ENCODE measurements at regions of chr15 and their contacts with region 1.

Region 1: DNA sequence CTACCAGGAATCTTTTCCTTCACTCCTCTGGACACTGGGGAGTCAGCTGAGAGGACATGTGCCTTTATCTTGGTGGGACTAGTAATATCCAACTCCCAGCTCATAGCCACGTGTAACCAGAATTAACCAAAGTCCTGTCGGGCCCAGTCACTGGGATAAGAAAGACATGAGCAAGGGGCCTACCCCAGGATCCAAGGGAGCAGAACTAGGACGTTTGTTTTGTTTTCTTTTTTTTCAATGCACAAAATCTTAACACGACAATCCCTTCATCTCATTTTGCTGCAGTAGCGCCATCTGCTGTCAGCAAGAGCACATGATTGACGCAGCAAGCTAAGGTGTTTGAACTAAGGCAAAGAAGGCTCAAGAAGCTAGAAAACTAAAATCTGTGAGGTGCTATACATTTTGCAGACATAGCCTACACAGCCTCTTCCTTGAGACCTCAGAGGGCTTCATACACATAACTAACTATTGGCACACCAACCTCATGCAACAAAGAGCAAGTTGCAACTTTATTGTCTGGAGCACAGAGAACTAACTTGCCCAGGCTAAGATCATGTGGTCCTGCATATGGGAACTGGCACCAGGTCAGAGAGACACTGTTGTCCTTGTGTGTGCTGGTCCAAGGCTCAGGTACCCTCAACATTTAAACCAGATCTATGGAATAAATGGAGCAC is 43.6 kb downstream of the RLBP1 start:
- DNase-seq: peak; percentile 60
- ATAC-seq: peak; percentile 62
- H3K4me3 Mint-ChIP-seq: no peak overlapping the region
- H3K27ac Mint-ChIP-seq: peak overlapping the region; percentile 35
- H3K4me1 Mint-ChIP-seq: peaks cover 3% of the 10 kb centered on the region; the same call in 1 of the 2 replicates
- H3K27me3 Mint-ChIP-seq: no peaks in the 10 kb centered on the region
- CTCF ChIP-seq: peak; percentile 58

Region 2: DNA sequence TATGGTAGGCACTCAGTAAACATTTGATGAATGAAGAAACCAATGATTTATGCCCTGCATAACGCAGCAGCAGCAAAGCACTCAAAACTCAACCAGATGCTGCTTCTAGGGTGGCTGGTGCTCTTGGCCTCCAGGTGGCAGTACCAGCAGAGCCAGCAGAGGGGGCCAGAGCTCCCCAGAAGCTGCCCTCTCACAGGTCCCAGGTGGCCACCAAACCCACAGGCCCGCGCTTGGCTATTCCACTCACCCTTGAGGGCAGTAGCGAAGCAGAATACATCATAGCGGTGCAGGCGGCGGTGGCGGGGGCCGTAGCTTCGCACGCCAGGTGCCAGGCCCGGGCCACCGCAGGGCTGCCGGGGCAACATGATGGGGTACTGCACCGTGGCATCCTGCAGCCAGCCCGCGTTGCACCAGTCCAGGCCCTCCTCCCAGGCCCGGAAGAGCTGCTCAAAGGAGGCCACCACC is 299.0 kb before region 1 on chr15:
- CTCF ChIA-PET with region 1: interaction called, 19 read pairs
- POLR2A ChIA-PET with region 1: no interaction called
- DNase-seq: peak; percentile 86
- ATAC-seq: peak; percentile 92
- H3K4me3 Mint-ChIP-seq: no peak overlapping the region
- H3K27ac Mint-ChIP-seq: peak overlapping the region; percentile 85; the same call in 1 of the 2 replicates
- H3K4me1 Mint-ChIP-seq: peaks cover 14% of the 10 kb centered on the region
- H3K27me3 Mint-ChIP-seq: no peaks in the 10 kb centered on the region
- CTCF ChIP-seq: peak; percentile 60

Region 3: GRCh38 chr15:88897456-88898194 is 280.1 kb before region 1 on chr15:
- CTCF ChIA-PET with region 1: interaction called, 20 read pairs
- POLR2A ChIA-PET with region 1: no interaction called
- DNase-seq: peak; percentile 53
- ATAC-seq: 0 out of 2 replicates have a peak, but pooled peaks have one; percentile 1
- H3K4me3 Mint-ChIP-seq: no peak overlapping the region; the same call in 1 of the 2 replicates
- H3K27ac Mint-ChIP-seq: peak overlapping the region; percentile 93
- H3K4me1 Mint-ChIP-seq: peaks cover 53% of the 10 kb centered on the region
- H3K27me3 Mint-ChIP-seq: 0 out of 2 replicates have a peak, but pooled peaks cover 2% of the 10 kb centered on the region
- CTCF ChIP-seq: no peak

Region 4: DNA sequence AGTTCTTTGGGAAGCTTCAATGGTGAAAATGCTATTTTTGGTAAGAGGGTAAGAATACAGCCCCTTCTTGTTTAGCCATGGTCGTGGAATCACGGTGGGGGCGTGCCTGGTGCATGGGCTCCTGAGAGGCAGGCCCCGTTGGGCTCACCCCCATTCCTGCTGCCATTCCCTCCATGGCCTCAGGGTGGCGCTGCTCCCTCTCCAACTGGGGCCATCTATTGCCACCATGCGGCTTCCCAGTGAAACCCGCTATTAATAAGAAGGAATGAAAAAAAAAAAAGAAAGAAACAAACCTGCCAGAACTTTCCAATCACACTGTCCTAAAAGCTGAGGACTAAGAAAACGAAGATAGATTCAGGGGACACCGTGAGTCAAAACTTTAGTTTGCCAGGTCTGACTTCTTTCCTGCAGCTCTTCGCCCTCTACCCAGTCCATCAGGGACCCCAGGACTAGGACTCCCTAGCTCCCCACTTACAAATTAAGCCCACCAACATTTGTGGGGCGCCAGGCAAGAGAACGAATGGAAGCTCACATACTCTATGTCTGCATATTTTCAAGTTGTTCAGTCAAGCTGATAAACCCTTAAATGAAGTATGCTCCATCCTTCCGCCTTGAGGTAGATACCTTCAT is 120.2 kb before region 1 on chr15:
- CTCF ChIA-PET with region 1: interaction called, 52 read pairs
- POLR2A ChIA-PET with region 1: no interaction called
- DNase-seq: peak; percentile 95
- ATAC-seq: peak; percentile 94
- H3K4me3 Mint-ChIP-seq: no peak overlapping the region
- H3K27ac Mint-ChIP-seq: peak overlapping the region; percentile 45
- H3K4me1 Mint-ChIP-seq: peaks cover 11% of the 10 kb centered on the region
- H3K27me3 Mint-ChIP-seq: no peaks in the 10 kb centered on the region
- CTCF ChIP-seq: peak; percentile 100

Region 5: DNA sequence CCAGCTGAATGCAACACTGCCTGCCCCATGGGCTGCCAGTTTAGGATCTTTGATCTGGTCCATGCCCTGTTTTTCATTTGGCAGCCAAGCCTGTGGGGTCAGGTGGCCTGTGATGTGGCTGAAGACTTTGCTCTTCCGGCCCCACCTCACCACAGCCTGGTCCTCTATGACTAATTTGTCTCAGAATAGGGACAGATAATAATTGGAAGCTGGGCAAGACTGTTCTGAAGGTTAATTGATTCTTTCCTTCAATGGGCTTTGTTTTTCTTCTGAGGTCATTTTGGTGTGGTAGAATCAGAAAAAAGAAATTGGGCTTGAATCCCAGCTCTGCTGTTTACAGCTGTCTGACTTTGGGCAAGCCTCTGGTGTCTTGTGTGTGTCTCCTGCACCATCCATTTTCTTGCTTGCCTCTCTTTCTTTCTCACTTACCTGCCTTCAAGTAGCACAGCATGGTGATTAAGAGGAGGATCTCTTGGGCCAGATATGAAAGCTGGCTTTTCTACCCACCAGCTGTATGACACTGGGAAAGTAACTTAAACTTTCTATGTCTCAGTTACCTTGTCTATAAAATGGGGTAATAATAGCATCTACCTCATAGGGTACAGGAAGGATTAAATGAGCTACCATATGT is 65.3 kb before region 1 on chr15:
- CTCF ChIA-PET with region 1: interaction called, 14 read pairs
- POLR2A ChIA-PET with region 1: no interaction called
- DNase-seq: no peak
- ATAC-seq: no peak
- H3K4me3 Mint-ChIP-seq: no peak overlapping the region
- H3K27ac Mint-ChIP-seq: peak overlapping the region; percentile 54
- H3K4me1 Mint-ChIP-seq: peaks cover 87% of the 10 kb centered on the region
- H3K27me3 Mint-ChIP-seq: no peaks in the 10 kb centered on the region
- CTCF ChIP-seq: no peak

Region 6: GRCh38 chr15:89150762-89151664 is 26.8 kb before region 1 on chr15:
- CTCF ChIA-PET with region 1: interaction called, 13 read pairs
- POLR2A ChIA-PET with region 1: interaction called, 3 read pairs
- DNase-seq: no peak
- ATAC-seq: no peak
- H3K4me3 Mint-ChIP-seq: no peak overlapping the region
- H3K27ac Mint-ChIP-seq: peak overlapping the region; percentile 26; the same call in 1 of the 2 replicates
- H3K4me1 Mint-ChIP-seq: peaks cover 16% of the 10 kb centered on the region
- H3K27me3 Mint-ChIP-seq: no peaks in the 10 kb centered on the region
- CTCF ChIP-seq: no peak

Region 7: GRCh38 chr15:89206908-89207331 is 29.1 kb after region 1 on chr15:
- CTCF ChIA-PET with region 1: interaction called, 19 read pairs
- POLR2A ChIA-PET with region 1: no interaction called
- DNase-seq: peak; percentile 90
- ATAC-seq: peak; percentile 98
- H3K4me3 Mint-ChIP-seq: no peak overlapping the region
- H3K27ac Mint-ChIP-seq: no peak overlapping the region
- H3K4me1 Mint-ChIP-seq: peaks cover 10% of the 10 kb centered on the region
- H3K27me3 Mint-ChIP-seq: no peaks in the 10 kb centered on the region; the same call in 1 of the 2 replicates
- CTCF ChIP-seq: peak; percentile 98

Measured in WTC11 (cell line).